MCF 10A (cell line): ENCODE measurements at regions of chr3 and their contacts with region 1.

Region 1: DNA sequence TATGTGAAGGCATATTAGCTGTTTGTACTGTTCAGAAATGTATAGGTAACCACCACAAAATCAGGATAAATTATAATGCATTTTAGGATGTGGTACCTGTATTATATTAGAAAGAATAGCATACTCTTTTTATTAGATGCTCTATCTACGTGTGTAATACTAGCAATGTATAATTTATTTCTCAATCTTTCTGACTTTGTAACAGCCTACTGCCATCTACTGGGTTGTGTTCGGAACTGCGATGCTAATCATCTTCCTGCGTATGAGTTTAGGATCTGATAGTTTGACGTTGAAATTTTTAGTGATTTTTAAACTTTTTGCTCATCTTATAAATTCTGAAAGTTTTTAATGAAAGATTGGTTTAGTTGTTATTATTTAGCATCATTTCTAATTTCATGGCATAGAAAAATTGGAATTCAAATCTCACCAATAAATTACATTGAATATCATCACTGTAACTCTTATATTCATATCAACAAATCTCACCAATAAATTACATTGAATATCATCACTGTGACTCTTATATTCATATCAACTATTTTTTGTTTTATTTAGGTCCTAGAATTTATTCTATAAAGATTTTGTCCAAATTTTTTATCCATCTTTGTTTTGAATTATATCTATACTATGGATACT is 322.7 kb upstream of the ZNF717 start:
- DNase-seq: peak; percentile 48
- H3K4me3 Mint-ChIP-seq: no peak overlapping the region
- H3K27ac Mint-ChIP-seq: no peak overlapping the region
- H3K4me1 Mint-ChIP-seq: no peaks in the 10 kb centered on the region
- H3K27me3 Mint-ChIP-seq: peaks cover 62% of the 10 kb centered on the region
- CTCF ChIP-seq: peak; percentile 82

Region 2: DNA sequence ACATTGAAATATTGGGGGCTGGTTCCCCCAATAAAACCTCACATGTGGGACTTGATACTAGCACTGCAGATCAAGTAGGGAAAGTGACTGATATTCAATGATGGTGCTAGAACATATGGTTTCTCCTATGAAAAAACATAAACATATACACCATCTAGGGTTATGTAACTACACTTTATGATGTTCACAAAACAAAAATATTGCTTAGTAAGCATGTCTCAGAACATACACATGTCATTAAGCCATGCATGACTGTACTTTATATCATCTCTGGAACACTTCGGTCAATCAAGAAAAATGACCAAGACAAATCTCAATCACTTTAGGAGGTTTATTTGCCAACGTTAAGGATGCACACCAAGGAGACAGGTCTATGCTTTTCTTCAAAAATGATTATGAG is 380.1 kb before region 1 on chr3:
- CTCF ChIA-PET with region 1: interaction called, 4 read pairs
- POLR2A ChIA-PET with region 1: no interaction called
- intact Hi-C with region 1: loop called (anchors 5 kb)
- DNase-seq: no peak
- H3K4me3 Mint-ChIP-seq: no peak overlapping the region
- H3K27ac Mint-ChIP-seq: no peak overlapping the region
- H3K4me1 Mint-ChIP-seq: no peaks in the 10 kb centered on the region
- H3K27me3 Mint-ChIP-seq: no peaks in the 10 kb centered on the region
- CTCF ChIP-seq: no peak

Region 3: GRCh38 chr3:75814797-75815196 is 293.3 kb before region 1 on chr3:
- CTCF ChIA-PET with region 1: interaction called, 6 read pairs
- POLR2A ChIA-PET with region 1: no interaction called
- intact Hi-C with region 1: loop called (anchors 1 kb)
- DNase-seq: no peak
- H3K4me3 Mint-ChIP-seq: no peak overlapping the region
- H3K27ac Mint-ChIP-seq: no peak overlapping the region
- H3K4me1 Mint-ChIP-seq: no peaks in the 10 kb centered on the region
- H3K27me3 Mint-ChIP-seq: peaks cover 10% of the 10 kb centered on the region
- CTCF ChIP-seq: no peak

Region 4: GRCh38 chr3:75978686-75979085 is 129.4 kb before region 1 on chr3:
- CTCF ChIA-PET with region 1: no interaction called
- POLR2A ChIA-PET with region 1: no interaction called
- intact Hi-C with region 1: no loop called
- DNase-seq: no peak
- H3K4me3 Mint-ChIP-seq: no peak overlapping the region
- H3K27ac Mint-ChIP-seq: no peak overlapping the region
- H3K4me1 Mint-ChIP-seq: no peaks in the 10 kb centered on the region
- H3K27me3 Mint-ChIP-seq: peaks cover 35% of the 10 kb centered on the region
- CTCF ChIP-seq: no peak

Region 5: GRCh38 chr3:76024640-76025039 is 83.4 kb before region 1 on chr3:
- CTCF ChIA-PET with region 1: interaction called, 6 read pairs
- POLR2A ChIA-PET with region 1: no interaction called
- intact Hi-C with region 1: loop called (anchors 1 kb)
- DNase-seq: no peak
- H3K4me3 Mint-ChIP-seq: no peak overlapping the region
- H3K27ac Mint-ChIP-seq: no peak overlapping the region
- H3K4me1 Mint-ChIP-seq: no peaks in the 10 kb centered on the region
- H3K27me3 Mint-ChIP-seq: peaks cover 18% of the 10 kb centered on the region
- CTCF ChIP-seq: peak; percentile 31

Region 6: DNA sequence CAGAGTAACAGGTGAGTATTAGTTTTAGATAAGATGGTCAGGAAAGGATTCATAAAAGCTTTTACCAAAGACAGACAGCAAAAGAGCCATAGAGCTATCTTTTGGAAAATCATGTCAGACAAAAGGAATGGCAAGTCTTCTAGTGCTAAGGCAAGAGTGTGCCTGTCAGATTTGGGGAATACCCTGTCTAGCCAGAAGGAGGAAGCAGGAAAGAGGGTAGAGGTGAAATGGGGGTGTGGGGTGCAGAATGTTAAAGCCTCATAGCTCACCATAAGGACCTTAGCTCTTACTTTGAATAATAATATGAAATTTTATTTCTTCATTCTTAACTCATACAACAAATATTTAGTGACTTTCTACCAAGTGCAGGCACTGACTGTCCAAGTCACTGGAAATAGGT is 419.7 kb after region 1 on chr3:
- CTCF ChIA-PET with region 1: no interaction called
- POLR2A ChIA-PET with region 1: no interaction called
- intact Hi-C with region 1: no loop called
- DNase-seq: no peak
- H3K4me3 Mint-ChIP-seq: no peak overlapping the region
- H3K27ac Mint-ChIP-seq: no peak overlapping the region
- H3K4me1 Mint-ChIP-seq: no peaks in the 10 kb centered on the region
- H3K27me3 Mint-ChIP-seq: peaks cover 68% of the 10 kb centered on the region
- CTCF ChIP-seq: no peak